ENCODE measurements at regions of chr15 and their contacts with region 1.

Region 1: GRCh38 chr15:67120839-67121643 is 55.6 kb downstream of the SMAD3 start:
- DNase-seq: peak; percentile 75 to 96 (median 86)
- ATAC-seq: peak; percentile 88
- H3K4me3 ChIP-seq: peak overlapping the region; percentile 36 to 42
- H3K4me3 Mint-ChIP-seq: peak overlapping the region; percentile 81
- H3K27ac ChIP-seq: peak overlapping the region; percentile 58 to 95
- H3K27ac Mint-ChIP-seq: peak overlapping the region; percentile 93
- H3K4me1 ChIP-seq: peaks cover 43% of the 10 kb centered on the region
- H3K4me1 Mint-ChIP-seq: peaks cover 79% of the 10 kb centered on the region
- H3K27me3 ChIP-seq: no peaks in the 10 kb centered on the region
- H3K27me3 Mint-ChIP-seq: no peaks in the 10 kb centered on the region
- CTCF ChIP-seq: no peak

Region 2: DNA sequence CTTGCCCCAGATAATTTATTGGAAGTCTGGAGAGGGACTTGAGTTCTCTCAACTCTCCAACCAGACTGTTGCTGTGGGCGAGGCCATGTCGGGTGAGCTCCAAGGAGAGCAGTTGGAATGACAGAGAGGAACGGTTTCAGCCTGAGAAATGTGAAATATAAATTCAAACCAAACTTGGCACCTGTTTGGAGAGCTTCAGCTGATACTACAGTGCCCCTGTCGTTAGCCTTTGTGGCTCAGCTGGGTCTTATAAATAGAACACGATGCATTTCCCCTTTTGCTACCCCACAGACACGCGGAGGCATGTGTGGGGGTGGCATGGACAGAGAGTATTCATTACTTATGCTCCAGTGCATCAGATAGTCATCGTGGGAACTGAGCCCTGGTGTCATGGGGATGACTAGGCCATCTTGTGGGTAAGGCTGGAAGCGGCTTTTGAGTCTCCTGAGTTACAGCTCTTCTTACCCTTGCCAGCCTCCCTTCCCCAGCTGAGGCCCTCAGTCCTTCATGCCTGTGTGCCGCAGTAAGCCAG is 40.1 kb before region 1 on chr15:
- CTCF ChIA-PET with region 1: interaction called, 5 read pairs
- POLR2A ChIA-PET with region 1: interaction called, 7 read pairs
- intact Hi-C with region 1: loop called in 1 of 2 experiments (anchors 5 kb)
- DNase-seq: peak in 5 of 9 experiments; percentile 33 to 74 (median 55)
- ATAC-seq: peak; percentile 41
- H3K4me3 ChIP-seq: no peak overlapping the region
- H3K4me3 Mint-ChIP-seq: peak overlapping the region; percentile 33
- H3K27ac ChIP-seq: peak overlapping the region in 1 of 2 experiments; percentile 31
- H3K27ac Mint-ChIP-seq: peak overlapping the region; percentile 72
- H3K4me1 ChIP-seq: peaks cover 55% of the 10 kb centered on the region
- H3K4me1 Mint-ChIP-seq: peaks cover 85% of the 10 kb centered on the region
- H3K27me3 ChIP-seq: no peaks in the 10 kb centered on the region
- H3K27me3 Mint-ChIP-seq: no peaks in the 10 kb centered on the region
- CTCF ChIP-seq: no peak

Region 3: GRCh38 chr15:67101911-67102598 is 19.0 kb before region 1 on chr15:
- CTCF ChIA-PET with region 1: interaction called, 8 read pairs
- POLR2A ChIA-PET with region 1: interaction called, 8 read pairs
- intact Hi-C with region 1: loop called (anchors 2 kb)
- DNase-seq: peak in 8 of 9 experiments; percentile 34 to 92 (median 56)
- ATAC-seq: peak; percentile 61
- H3K4me3 ChIP-seq: peak overlapping the region in 1 of 2 experiments; percentile 9
- H3K4me3 Mint-ChIP-seq: no peak overlapping the region
- H3K27ac ChIP-seq: peak overlapping the region in 1 of 2 experiments; percentile 71
- H3K27ac Mint-ChIP-seq: no peak overlapping the region
- H3K4me1 ChIP-seq: peaks cover 86% of the 10 kb centered on the region
- H3K4me1 Mint-ChIP-seq: peaks cover 29% of the 10 kb centered on the region
- H3K27me3 ChIP-seq: no peaks in the 10 kb centered on the region
- H3K27me3 Mint-ChIP-seq: no peaks in the 10 kb centered on the region
- CTCF ChIP-seq: no peak

Region 4: GRCh38 chr15:67150028-67150860 is 29.2 kb after region 1 on chr15:
- CTCF ChIA-PET with region 1: no interaction called
- POLR2A ChIA-PET with region 1: no interaction called
- intact Hi-C with region 1: loop called in 1 of 2 experiments (anchors 2 kb)
- DNase-seq: peak in 4 of 9 experiments; percentile 23 to 55 (median 38)
- ATAC-seq: peak; percentile 45
- H3K4me3 ChIP-seq: no peak overlapping the region
- H3K4me3 Mint-ChIP-seq: peak overlapping the region; percentile 1
- H3K27ac ChIP-seq: no peak overlapping the region
- H3K27ac Mint-ChIP-seq: peak overlapping the region; percentile 1
- H3K4me1 ChIP-seq: peaks cover 46% of the 10 kb centered on the region
- H3K4me1 Mint-ChIP-seq: peaks cover 65% of the 10 kb centered on the region
- H3K27me3 ChIP-seq: no peaks in the 10 kb centered on the region
- H3K27me3 Mint-ChIP-seq: no peaks in the 10 kb centered on the region
- CTCF ChIP-seq: no peak

Measured in CD8-positive, alpha-beta T cell (primary cell).